ENCODE measurements at regions of chr5 and their contacts with region 1.

Region 1: DNA sequence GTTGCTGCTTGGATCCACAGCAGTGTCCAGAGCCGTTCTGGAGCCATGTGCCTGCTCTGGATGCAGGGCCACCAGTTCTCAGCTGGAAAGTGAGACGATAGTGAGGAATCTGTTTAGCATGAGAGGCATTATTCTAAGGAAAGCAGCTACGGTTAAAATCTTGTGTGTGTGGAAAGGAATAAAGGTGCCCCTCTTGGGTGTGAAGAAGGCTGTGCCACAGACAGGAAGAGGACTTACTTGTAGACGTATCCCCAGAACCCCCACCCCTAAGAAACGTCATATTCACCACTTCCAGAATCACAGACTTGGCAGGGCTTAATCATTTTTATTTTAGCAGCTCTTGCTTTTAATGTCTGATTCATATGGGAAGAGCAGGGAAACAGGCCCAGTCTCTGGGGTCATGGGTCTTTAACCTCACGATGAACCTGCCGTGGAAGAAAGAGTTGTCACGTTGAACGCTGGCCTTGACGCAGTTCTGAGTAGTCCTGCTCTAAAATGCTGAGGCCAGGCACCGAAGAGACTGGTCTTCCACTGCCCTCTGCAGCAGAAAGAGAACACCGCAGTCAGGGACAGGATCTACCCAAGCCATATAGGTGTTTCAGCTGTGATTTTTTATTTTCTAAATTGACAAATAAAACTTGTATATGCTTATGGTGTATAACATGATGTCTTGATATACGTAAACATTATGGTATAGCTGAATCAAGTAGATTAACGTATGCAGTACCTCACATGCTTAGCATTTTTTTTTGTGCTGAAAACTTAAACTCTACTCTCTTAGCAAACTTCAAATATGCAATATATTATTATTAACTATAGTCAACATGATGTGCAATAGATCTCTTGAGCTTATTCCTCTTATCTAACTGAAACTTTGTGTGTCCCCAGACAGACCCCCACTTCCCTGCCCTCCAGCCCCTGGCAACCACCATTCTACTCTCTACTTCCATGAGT is 38.8 kb downstream of the CARTPT start:
- DNase-seq: peak; percentile 37 to 94 (median 69)

Region 2: DNA sequence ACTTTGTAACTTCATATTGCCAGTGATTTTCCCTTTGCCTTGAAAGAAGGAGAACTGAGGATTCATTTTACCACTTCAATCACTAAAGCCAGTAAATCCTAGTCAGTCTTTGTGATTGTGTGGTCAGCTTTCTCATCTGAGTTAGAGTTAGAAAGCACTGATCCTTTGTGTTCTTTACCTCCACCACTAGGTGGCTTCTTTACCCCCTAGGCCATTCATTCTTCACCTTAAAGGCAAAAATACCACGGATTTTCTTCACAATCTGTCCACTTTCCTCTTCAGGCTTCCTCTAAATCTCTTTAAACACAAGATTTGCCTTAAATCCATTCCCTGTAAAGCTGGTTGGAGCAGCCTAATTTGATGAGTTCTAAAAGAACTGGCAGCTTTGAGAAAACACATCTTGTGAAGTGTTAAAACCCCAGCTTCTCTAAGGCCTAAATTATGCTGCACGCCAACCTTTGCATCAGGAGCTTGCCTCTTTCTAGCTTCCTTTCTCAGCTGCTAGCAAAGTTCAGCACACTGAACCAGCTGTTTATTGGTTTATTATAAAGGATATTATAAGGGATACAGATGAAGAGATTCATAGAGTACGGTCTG is 282.0 kb before region 1 on chr5:
- intact Hi-C with region 1: loop called (anchors 10 kb)
- DNase-seq: no peak

Region 3: DNA sequence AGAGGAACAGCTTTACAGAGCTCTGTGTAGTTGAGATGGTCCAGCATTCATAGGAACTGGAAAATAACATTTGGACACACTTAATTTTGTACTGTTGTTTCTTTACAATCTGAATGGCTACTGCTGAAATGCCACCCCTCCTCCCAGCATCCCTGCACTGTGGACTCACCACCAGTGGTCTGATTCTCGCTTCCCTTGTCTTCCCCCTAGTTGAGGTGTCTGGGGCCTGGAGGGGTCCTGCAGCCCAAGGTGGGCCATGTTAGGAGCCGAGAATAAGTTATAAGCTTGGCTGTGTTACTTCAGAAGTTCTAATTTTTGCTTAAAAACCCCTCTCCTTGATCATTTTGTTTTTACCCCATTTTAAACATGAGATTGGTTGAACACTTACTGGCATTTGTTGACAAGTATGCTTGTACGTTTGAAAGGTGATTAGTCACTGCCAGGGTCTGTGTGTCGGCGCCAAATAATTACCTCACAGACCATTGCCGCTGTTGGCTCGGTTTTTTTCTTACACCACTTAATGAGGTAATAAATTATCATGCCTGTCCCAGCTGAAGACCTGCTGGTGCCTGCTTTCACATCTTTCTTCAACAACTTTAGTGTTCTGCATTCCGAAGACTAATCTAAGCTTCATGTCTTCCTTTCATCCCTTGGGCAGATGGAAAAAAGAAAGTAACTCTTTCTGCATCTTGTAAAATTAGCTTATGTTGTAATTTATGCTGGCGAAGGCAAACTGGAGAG is 104.9 kb before region 1 on chr5:
- intact Hi-C with region 1: no loop called
- DNase-seq: no peak

Measured in posterior cingulate gyrus (tissue), 11 donors.